Activated CD4-positive, alpha-beta T cell treated with anti-CD3 and anti-CD28 coated beads for 36 hours (primary cell): ENCODE measurements at regions of chr10 and their contacts with region 1.

Region 1: DNA sequence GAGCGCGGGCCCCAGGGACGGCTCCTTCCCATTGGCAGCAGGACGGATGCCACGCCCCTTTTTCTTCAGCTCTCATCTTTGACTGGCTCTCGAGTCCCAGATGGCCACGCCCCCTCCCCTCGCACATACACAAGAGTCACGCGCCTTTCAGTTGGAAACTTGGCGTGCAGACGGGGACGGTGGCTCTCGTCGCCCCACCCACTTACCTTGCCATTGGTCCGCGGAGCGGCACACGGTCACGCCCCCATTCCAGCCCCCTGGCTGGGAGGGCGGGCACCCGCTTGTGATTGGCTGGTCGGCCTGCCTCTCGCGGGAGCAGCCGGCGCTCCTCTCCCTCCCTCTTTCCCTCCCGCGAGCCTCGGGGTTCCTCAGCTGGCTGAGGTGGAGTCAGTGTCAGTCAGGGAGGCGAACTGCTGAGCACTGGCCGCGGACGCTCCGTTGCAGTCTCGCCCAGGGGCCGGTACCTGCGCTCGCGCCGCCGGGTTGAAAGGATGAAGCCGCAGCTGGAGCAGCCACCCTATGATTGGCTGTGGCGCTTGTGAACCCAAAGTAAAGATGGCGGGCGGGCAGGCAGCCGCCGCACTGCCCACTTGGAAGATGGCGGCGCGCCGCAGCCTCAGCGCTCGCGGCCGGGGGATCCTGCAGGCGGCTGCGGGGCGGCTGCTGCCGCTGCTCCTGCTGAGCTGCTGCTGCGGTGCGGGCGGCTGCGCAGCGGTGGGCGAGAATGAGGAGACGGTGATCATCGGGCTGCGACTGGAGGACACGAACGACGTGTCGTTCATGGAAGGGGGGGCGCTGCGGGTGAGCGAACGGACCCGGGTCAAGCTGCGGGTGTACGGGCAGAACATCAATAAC is at the start of gene CNNM2:
- DNase-seq: peak; percentile 100
- ATAC-seq: peak; percentile 93
- H3K4me3 Mint-ChIP-seq: peak within 1 kb of the TSS; percentile 83
- H3K27ac Mint-ChIP-seq: peak within 1 kb of the TSS; percentile 88
- H3K4me1 Mint-ChIP-seq: peaks cover 53% of the 10 kb centered on the region
- H3K27me3 Mint-ChIP-seq: peaks cover 14% of the 10 kb centered on the region
- total RNA-seq, gene CNNM2: 4.2 to 4.5 TPM

Region 2: GRCh38 chr10:102540023-102540422 is 378.2 kb before region 1 on chr10:
- CTCF ChIA-PET with region 1: no interaction called
- POLR2A ChIA-PET with region 1: no interaction called
- intact Hi-C with region 1: no loop called
- DNase-seq: peak; percentile 35
- ATAC-seq: peak; percentile 96
- H3K4me3 Mint-ChIP-seq: no peak overlapping the region
- H3K27ac Mint-ChIP-seq: no peak overlapping the region
- H3K4me1 Mint-ChIP-seq: peaks cover 18% of the 10 kb centered on the region
- H3K27me3 Mint-ChIP-seq: no peaks in the 10 kb centered on the region

Region 3: GRCh38 chr10:102713814-102714620 is 204.2 kb before region 1 on chr10 and contains the start of gene ARL3:
- CTCF ChIA-PET with region 1: no interaction called
- POLR2A ChIA-PET with region 1: no interaction called
- intact Hi-C with region 1: loop called in 1 of 2 experiments (anchors 1 kb)
- DNase-seq: peak; percentile 99
- ATAC-seq: peak; percentile 90
- H3K4me3 Mint-ChIP-seq: peak within 1 kb of the TSS; percentile 82
- H3K27ac Mint-ChIP-seq: peak within 1 kb of the TSS; percentile 81
- H3K4me1 Mint-ChIP-seq: peaks cover 59% of the 10 kb centered on the region
- H3K27me3 Mint-ChIP-seq: no peaks in the 10 kb centered on the region
- total RNA-seq, gene ARL3: 6.4 to 6.9 TPM

Region 4: GRCh38 chr10:102853944-102854694 is 64.1 kb before region 1 on chr10 and contains the start of gene BORCS7:
- CTCF ChIA-PET with region 1: interaction called, 3 read pairs
- POLR2A ChIA-PET with region 1: no interaction called
- intact Hi-C with region 1: loop called (anchors 1 kb)
- DNase-seq: peak; percentile 94
- ATAC-seq: peak; percentile 100
- H3K4me3 Mint-ChIP-seq: peak within 1 kb of the TSS; percentile 95
- H3K27ac Mint-ChIP-seq: peak within 1 kb of the TSS; percentile 99
- H3K4me1 Mint-ChIP-seq: peaks cover 14% of the 10 kb centered on the region
- H3K27me3 Mint-ChIP-seq: no peaks in the 10 kb centered on the region
- total RNA-seq, gene BORCS7: 4.5 to 5.1 TPM

Region 5: DNA sequence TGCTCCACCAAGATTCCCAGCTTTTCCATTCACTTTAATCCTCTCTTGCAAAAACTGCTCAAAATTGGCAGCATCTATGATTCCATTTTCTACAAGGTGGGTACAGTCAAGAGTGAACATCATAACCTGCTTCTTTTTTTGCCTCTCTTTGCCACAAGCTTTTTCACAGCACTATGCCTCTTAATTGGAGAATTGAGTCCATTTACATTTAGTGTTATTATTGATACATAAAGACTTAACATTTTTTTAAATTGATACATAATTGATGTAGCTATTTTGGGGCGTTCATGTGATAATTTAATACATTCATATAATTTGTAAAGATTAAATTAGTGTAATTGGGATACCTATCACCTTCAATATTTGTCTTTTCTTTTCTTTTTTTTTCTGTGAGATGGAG is 30.1 kb before region 1 on chr10:
- CTCF ChIA-PET with region 1: no interaction called
- POLR2A ChIA-PET with region 1: no interaction called
- intact Hi-C with region 1: no loop called
- DNase-seq: no peak
- ATAC-seq: no peak
- H3K4me3 Mint-ChIP-seq: no peak overlapping the region
- H3K27ac Mint-ChIP-seq: no peak overlapping the region
- H3K4me1 Mint-ChIP-seq: no peaks in the 10 kb centered on the region
- H3K27me3 Mint-ChIP-seq: no peaks in the 10 kb centered on the region

Region 6: DNA sequence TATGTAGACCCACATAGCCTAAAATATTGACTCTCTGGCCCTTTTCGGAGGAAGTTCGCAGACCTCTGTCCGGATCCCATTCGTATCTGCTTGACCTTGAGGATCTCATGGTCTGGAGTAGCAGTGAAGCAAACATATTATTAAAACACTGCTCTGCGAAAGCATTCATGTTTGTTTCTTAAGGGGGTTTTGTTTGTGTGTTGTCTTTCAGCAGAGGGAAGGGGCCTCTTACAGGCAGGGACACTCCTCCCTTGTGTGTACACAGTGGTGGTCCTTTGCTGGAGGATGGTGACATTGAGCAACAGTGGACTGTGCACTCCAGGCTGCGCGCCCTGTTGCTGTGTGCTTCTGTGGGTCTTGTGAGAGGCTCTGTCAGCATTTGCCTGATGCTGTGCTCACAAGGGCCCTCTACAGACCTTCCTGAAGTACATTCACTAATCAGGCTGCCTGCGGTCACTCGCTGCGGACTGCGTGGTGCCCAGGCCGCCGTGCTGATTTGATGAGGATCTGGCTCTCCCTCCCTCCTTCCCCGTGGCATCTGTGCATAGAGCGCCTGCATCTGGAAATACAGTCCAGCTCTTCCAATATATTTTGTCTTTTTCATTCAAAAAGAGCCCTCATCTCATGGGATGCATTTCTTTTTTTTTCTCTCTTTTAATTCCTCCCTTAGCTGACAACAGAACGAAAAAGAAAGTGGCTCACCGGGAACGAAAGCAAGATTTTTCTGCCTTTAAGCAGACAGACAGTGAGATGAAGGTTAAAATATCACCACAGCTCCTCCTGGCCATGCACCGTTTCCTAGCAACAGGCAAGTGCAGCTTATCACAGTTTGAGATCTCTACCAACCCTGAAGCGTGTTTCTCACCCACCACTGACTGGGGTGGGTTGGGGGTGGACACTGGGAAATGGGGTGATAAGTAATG is 135.7 kb after region 1 on chr10:
- CTCF ChIA-PET with region 1: interaction called, 19 read pairs
- POLR2A ChIA-PET with region 1: interaction called, 6 read pairs
- intact Hi-C with region 1: loop called in 1 of 2 experiments (anchors 1 kb)
- DNase-seq: peak; percentile 65
- ATAC-seq: peak; percentile 85
- H3K4me3 Mint-ChIP-seq: peak overlapping the region; percentile 61
- H3K27ac Mint-ChIP-seq: peak overlapping the region; percentile 65
- H3K4me1 Mint-ChIP-seq: peaks cover 20% of the 10 kb centered on the region
- H3K27me3 Mint-ChIP-seq: no peaks in the 10 kb centered on the region

Region 7: DNA sequence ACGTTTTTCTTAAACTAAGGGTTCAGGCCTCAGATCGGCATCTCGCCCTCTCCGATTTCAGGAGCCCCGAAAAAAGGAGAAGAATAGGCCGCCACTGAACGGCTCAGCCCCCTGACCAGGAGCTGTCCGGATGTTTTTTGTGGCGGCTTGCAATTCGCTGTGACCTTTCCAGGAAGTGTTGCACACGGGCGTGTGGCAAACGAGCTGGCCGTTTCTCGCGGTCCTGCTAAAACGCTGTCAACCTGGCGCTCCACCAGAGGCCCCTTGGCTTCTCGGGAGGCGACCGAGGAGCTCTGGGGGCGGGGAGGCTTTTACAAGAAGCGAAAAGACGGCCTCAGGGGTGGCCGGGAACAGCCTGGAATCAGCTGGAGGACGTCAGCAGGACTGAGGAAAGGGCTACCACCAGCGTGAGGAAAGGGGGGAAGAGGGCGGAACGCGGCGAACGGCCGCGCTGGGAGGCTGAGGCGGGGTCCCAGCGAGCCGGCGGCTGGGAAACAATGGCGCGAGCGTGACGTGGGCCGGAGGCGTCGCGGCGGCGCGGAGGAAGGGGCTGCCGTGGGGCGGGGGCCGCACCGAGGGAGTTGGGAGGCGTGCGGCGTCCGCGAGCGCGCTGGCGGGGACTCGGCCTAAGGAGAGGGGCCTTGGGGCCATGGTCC is 274.4 kb after region 1 on chr10:
- CTCF ChIA-PET with region 1: interaction called, 6 read pairs
- POLR2A ChIA-PET with region 1: no interaction called
- intact Hi-C with region 1: loop called (anchors 1 to 5 kb)
- DNase-seq: peak; percentile 81
- ATAC-seq: peak; percentile 50
- H3K4me3 Mint-ChIP-seq: peak overlapping the region; percentile 95
- H3K27ac Mint-ChIP-seq: peak overlapping the region; percentile 99
- H3K4me1 Mint-ChIP-seq: peaks cover 44% of the 10 kb centered on the region
- H3K27me3 Mint-ChIP-seq: no peaks in the 10 kb centered on the region

Region 8: DNA sequence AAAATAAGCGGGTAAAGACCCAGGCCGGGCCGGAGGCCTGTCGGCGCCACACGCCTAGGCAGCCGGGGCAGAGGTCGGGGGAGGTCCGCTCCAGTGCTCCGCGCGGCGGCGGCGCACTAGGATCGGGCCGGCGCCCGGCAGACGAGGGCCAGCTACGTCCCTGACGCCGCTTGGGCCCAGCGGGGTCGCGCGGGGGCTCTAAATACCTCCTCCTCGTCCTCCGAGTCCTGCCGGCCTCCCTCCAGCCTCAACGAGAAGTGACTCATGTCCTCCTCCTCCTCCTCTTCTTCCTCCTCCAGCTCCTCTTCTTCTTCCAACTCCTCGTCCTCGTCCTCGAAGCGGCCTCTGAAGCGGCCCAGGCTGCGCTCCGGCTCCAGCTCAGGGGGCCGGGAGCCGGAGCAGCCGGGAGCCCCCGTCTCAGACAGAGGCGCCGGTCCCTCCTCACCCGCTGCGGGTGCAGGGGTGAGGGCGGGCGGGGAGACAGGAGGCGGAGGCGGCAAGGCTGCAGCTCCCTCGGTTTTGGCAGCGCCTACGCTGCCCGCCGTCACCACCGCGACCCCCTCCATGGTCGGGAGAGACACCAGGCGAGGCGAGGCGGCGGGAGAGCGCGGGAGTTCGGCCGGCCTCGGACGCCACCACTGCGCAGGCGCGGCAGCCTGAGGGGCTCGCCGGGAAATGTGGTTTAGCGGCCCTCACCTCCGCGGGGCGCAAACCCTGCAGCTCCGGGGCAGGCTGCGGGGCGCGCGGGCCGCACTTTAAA is 432.5 kb after region 1 on chr10 and contains the start of gene PCGF6:
- CTCF ChIA-PET with region 1: no interaction called
- POLR2A ChIA-PET with region 1: no interaction called
- intact Hi-C with region 1: loop called in 1 of 2 experiments (anchors 5 kb)
- DNase-seq: peak; percentile 83
- ATAC-seq: peak; percentile 86
- H3K4me3 Mint-ChIP-seq: peak within 1 kb of the TSS; percentile 86
- H3K27ac Mint-ChIP-seq: peak within 1 kb of the TSS; percentile 84
- H3K4me1 Mint-ChIP-seq: peaks cover 9% of the 10 kb centered on the region
- H3K27me3 Mint-ChIP-seq: no peaks in the 10 kb centered on the region
- total RNA-seq, gene PCGF6: 10.4 to 14.8 TPM

Region 9: GRCh38 chr10:103481974-103482531 is 563.9 kb after region 1 on chr10:
- CTCF ChIA-PET with region 1: no interaction called
- POLR2A ChIA-PET with region 1: no interaction called
- intact Hi-C with region 1: loop called in 1 of 2 experiments (anchors 5 kb)
- DNase-seq: no peak
- ATAC-seq: peak; percentile 69
- H3K4me3 Mint-ChIP-seq: no peak overlapping the region
- H3K27ac Mint-ChIP-seq: no peak overlapping the region
- H3K4me1 Mint-ChIP-seq: no peaks in the 10 kb centered on the region
- H3K27me3 Mint-ChIP-seq: no peaks in the 10 kb centered on the region